CD8-positive, alpha-beta T cell (primary cell): ENCODE measurements at regions of chr15 and their contacts with region 1.

Region 1: DNA sequence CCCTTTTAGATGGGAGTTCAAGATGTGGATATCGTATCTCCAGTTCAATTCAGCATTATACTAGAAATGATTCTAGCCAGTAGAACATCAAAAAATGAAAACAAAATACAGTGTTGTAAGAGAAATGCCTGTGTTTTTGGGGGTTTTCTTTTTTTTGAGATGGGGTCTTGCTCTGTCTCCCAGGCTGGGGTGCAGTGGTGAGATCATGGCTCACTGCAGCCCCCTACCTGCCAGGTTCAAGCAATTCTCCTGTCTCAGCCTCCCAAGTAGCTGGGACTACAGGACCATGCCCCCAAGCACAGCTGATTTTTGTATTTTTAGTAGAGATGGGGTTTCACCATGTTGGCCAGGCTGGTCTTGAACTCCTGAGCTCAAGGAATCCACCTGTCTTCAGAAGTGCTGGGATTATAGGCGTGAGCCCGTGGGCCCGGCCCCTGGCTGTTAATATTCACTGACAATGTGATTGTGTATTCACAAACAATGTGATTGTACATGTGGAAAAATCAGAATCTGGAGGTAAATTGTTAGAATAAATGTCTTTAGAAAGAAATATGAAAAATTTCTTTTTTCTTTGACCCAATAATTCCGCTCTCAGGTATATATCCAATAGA is 59.0 kb downstream of the ARIH1 start:
- DNase-seq: peak in 5 of 9 experiments; percentile 16 to 63 (median 37)
- ATAC-seq: peak; percentile 54
- H3K4me3 ChIP-seq: no peak overlapping the region
- H3K4me3 Mint-ChIP-seq: no peak overlapping the region
- H3K27ac ChIP-seq: no peak overlapping the region
- H3K27ac Mint-ChIP-seq: no peak overlapping the region
- H3K4me1 ChIP-seq: peaks cover 24% of the 10 kb centered on the region
- H3K4me1 Mint-ChIP-seq: peaks cover 66% of the 10 kb centered on the region
- H3K27me3 ChIP-seq: no peaks in the 10 kb centered on the region
- H3K27me3 Mint-ChIP-seq: no peaks in the 10 kb centered on the region
- CTCF ChIP-seq: peak; percentile 46

Region 2: GRCh38 chr15:72199711-72200212 is 333.3 kb before region 1 on chr15:
- CTCF ChIA-PET with region 1: interaction called, 4 read pairs
- POLR2A ChIA-PET with region 1: no interaction called
- intact Hi-C with region 1: loop called in 1 of 2 experiments (anchors 2 kb)
- DNase-seq: peak; percentile 55 to 84 (median 77)
- ATAC-seq: peak; percentile 91
- H3K4me3 ChIP-seq: no peak overlapping the region
- H3K4me3 Mint-ChIP-seq: no peak overlapping the region
- H3K27ac ChIP-seq: no peak overlapping the region
- H3K27ac Mint-ChIP-seq: no peak overlapping the region
- H3K4me1 ChIP-seq: peaks cover 5% of the 10 kb centered on the region
- H3K4me1 Mint-ChIP-seq: peaks cover 9% of the 10 kb centered on the region
- H3K27me3 ChIP-seq: peaks cover 0 to 4% of the 10 kb centered on the region in 2 experiments
- H3K27me3 Mint-ChIP-seq: peaks cover 13% of the 10 kb centered on the region
- CTCF ChIP-seq: peak; percentile 83

Region 3: DNA sequence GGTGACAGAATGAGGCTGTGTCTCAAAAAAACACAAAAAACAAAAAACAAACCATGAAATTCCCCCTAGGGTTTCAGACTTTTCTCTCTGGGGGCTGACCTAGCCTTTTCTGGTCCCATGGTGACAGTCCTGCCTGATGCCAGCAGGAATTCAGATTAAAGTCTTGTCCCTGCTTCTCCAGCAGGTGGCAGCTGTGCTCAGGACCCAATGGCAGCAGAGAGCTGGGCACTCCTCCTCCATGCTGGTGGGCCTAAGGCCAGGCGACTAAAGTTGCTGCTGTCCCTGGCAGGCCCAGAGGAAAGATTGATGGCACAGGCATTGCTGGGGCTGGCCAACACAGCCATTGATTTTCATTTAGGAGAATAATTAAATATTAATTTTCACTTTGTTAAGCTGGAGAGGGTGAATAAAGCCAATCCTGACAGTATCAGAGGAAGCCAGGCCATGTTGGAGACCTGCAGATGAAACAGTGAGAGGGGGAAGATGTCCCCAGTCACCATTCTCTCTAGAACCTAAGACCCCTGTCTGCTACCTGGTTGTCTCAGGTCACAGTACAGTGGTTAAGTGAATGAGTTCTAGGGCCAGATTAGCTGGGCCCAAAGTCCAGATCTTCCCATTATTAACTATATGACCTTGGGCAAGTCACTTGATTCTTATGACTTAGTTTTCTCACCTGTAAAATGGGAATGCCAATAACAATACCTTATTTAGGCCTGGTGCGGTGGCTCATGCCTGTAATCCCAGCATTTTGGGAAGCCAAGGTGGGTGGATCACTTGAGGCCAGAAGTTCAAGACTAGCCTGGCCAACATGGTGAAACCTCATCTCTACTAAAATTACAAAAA is 220.3 kb before region 1 on chr15:
- CTCF ChIA-PET with region 1: interaction called, 16 read pairs
- POLR2A ChIA-PET with region 1: no interaction called
- intact Hi-C with region 1: loop called (anchors 1 to 5 kb)
- DNase-seq: peak; percentile 12 to 74 (median 60)
- ATAC-seq: peak; percentile 89
- H3K4me3 ChIP-seq: no peak overlapping the region
- H3K4me3 Mint-ChIP-seq: no peak overlapping the region
- H3K27ac ChIP-seq: no peak overlapping the region
- H3K27ac Mint-ChIP-seq: no peak overlapping the region
- H3K4me1 ChIP-seq: no peaks in the 10 kb centered on the region
- H3K4me1 Mint-ChIP-seq: no peaks in the 10 kb centered on the region
- H3K27me3 ChIP-seq: no peaks in the 10 kb centered on the region
- H3K27me3 Mint-ChIP-seq: no peaks in the 10 kb centered on the region
- CTCF ChIP-seq: peak; percentile 69

Region 4: GRCh38 chr15:72339777-72340177 is 193.3 kb before region 1 on chr15:
- CTCF ChIA-PET with region 1: interaction called, 4 read pairs
- POLR2A ChIA-PET with region 1: no interaction called
- intact Hi-C with region 1: loop called (anchors 1 to 10 kb)
- DNase-seq: no peak
- ATAC-seq: no peak
- H3K4me3 ChIP-seq: no peak overlapping the region
- H3K4me3 Mint-ChIP-seq: no peak overlapping the region
- H3K27ac ChIP-seq: no peak overlapping the region
- H3K27ac Mint-ChIP-seq: no peak overlapping the region
- H3K4me1 ChIP-seq: no peaks in the 10 kb centered on the region
- H3K4me1 Mint-ChIP-seq: no peaks in the 10 kb centered on the region
- H3K27me3 ChIP-seq: no peaks in the 10 kb centered on the region
- H3K27me3 Mint-ChIP-seq: no peaks in the 10 kb centered on the region
- CTCF ChIP-seq: no peak

Region 5: DNA sequence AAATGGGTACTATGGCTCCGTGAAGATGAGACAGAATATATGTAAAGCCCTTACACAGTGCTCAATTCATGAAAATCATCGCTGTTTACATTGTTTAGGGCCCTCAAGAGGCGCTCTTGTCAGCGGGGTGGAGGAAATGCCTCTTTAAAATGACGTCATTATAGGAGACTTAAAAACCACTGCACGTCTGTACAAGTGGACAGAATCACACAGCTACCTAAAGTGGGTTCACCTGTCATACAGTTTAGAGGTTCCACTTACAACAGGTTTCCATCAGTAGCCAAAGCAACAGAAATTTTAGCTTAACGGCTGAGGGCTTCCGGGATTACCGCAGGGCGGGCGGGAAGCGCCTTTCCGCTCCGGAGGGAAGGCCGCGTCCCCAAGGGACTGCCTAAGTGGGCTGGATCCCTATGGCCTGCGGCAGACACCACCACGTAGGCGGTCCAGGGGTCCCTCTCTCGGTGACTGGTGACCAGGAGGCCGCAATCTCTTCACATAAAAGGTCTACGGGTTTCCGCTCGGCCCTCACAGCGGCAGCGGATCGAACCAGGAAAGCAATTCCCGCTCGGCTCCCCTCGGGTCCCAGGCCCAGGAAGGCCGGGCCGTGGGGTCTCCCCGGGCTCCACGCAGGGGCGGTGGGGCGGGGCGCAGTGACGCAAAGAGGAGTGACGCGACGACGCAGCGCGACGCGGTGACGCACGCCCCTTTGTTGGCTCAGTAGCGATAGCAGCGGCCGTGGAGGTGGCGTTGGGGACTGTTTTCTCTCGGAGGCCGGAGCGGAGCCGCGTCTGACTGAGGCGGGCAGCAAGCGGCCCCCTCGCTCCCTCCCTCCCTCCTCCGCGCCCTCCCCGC is 59.3 kb before region 1 on chr15 and contains the start of gene ARIH1:
- CTCF ChIA-PET with region 1: interaction called, 8 read pairs
- POLR2A ChIA-PET with region 1: interaction called, 3 read pairs
- intact Hi-C with region 1: loop called in 1 of 2 experiments (anchors 5 kb)
- DNase-seq: peak; percentile 95 to 99 (median 96)
- ATAC-seq: peak; percentile 72
- H3K4me3 ChIP-seq: peak within 1 kb of the TSS; percentile 93 to 100
- H3K4me3 Mint-ChIP-seq: peak within 1 kb of the TSS; percentile 97
- H3K27ac ChIP-seq: peak within 1 kb of the TSS; percentile 100
- H3K27ac Mint-ChIP-seq: peak within 1 kb of the TSS; percentile 99
- H3K4me1 ChIP-seq: peaks cover 46% of the 10 kb centered on the region
- H3K4me1 Mint-ChIP-seq: peaks cover 50% of the 10 kb centered on the region
- H3K27me3 ChIP-seq: no peaks in the 10 kb centered on the region
- H3K27me3 Mint-ChIP-seq: no peaks in the 10 kb centered on the region
- CTCF ChIP-seq: peak; percentile 42
- total RNA-seq, gene ARIH1: 343 to 351 TPM

Region 6: GRCh38 chr15:72491768-72492167 is 41.3 kb before region 1 on chr15:
- CTCF ChIA-PET with region 1: interaction called, 3 read pairs
- POLR2A ChIA-PET with region 1: no interaction called
- intact Hi-C with region 1: loop called in 1 of 2 experiments (anchors 5 kb)
- DNase-seq: no peak
- ATAC-seq: no peak
- H3K4me3 ChIP-seq: no peak overlapping the region
- H3K4me3 Mint-ChIP-seq: no peak overlapping the region
- H3K27ac ChIP-seq: no peak overlapping the region
- H3K27ac Mint-ChIP-seq: no peak overlapping the region
- H3K4me1 ChIP-seq: peaks cover 56% of the 10 kb centered on the region
- H3K4me1 Mint-ChIP-seq: peaks cover 81% of the 10 kb centered on the region
- H3K27me3 ChIP-seq: no peaks in the 10 kb centered on the region
- H3K27me3 Mint-ChIP-seq: no peaks in the 10 kb centered on the region
- CTCF ChIP-seq: no peak